Lower leg skin (tissue), 4 donors: ENCODE measurements at regions of chr1 and their contacts with region 1.

Region 1: DNA sequence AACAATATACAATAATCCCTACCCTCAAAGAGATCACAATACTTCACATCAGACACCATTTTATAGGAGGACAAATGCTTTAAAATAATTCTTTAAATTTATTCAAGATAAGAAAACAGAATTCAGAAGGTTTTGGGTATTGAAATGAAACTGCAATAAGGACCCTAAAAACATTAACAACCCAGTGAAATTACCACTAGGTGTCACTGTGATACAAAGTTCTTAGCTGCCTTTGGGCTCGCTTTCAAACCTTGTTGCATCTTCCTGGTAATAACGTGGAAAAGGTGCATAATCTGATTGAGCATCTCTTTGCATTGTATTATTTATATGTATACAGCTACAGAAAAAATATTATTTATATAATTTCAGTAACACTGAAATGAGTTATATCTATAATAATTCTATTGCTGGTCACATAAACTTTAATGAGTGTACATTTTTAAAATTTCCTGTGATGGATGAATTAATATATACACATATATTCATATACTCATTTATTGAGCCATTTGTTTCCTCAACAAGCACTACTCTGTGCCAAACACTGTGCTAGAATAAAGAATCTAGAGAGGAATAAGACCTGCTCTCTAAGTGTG is 185.2 kb downstream of the FAF1 start:
- DNase-seq: no peak
- H3K4me3 ChIP-seq: no peak overlapping the region
- CTCF ChIP-seq: peak in 1 of 3 donors; percentile 33
- POLR2A ChIP-seq: no peak

Region 2: GRCh38 chr1:51192213-51192843 is 417.5 kb after region 1 on chr1:
- intact Hi-C with region 1: loop called (anchors 10 kb)
- DNase-seq: peak; percentile 56 to 87
- H3K4me3 ChIP-seq: no peak overlapping the region
- CTCF ChIP-seq: no peak
- POLR2A ChIP-seq: no peak